Spleen (tissue), 13 donors: ENCODE measurements at regions of chr1 and their contacts with region 1.

Region 1: GRCh38 chr1:14923727-14924452 is 229.7 kb upstream of the TMEM51 start:
- DNase-seq: peak; percentile 89
- H3K4me3 ChIP-seq: peak overlapping the region in 7 of 8 donors; percentile 17 to 81 (median 67)
- H3K27ac ChIP-seq: peak overlapping the region in 7 of 8 donors; percentile 65 to 92 (median 85)
- H3K4me1 ChIP-seq: peaks cover 3 to 61% (median 33%) of the 10 kb centered on the region in 6 donors
- H3K27me3 ChIP-seq: peaks cover 0 to 70% (median 13%) of the 10 kb centered on the region in 7 donors
- CTCF ChIP-seq: no peak
- POLR2A ChIP-seq: no peak

Region 2: GRCh38 chr1:14571819-14572767 is 351.8 kb before region 1 on chr1:
- intact Hi-C with region 1: no loop called
- DNase-seq: no peak
- H3K4me3 ChIP-seq: no peak overlapping the region
- H3K27ac ChIP-seq: no peak overlapping the region
- H3K4me1 ChIP-seq: no peaks in the 10 kb centered on the region
- H3K27me3 ChIP-seq: peaks cover 0 to 12% (median 0%) of the 10 kb centered on the region in 7 donors
- CTCF ChIP-seq: no peak
- POLR2A ChIP-seq: no peak

Region 3: GRCh38 chr1:15028102-15028501 is 104.2 kb after region 1 on chr1:
- intact Hi-C with region 1: loop called (anchors 10 kb)
- DNase-seq: no peak
- H3K4me3 ChIP-seq: no peak overlapping the region
- H3K27ac ChIP-seq: peak overlapping the region in 5 of 8 donors; percentile 41 to 62 (median 49)
- H3K4me1 ChIP-seq: peaks cover 0 to 89% (median 44%) of the 10 kb centered on the region in 6 donors
- H3K27me3 ChIP-seq: no peaks in the 10 kb centered on the region
- CTCF ChIP-seq: no peak
- POLR2A ChIP-seq: no peak